Endothelial cell of umbilical vein (primary cell): ENCODE measurements at regions of chr5 and their contacts with region 1.

Region 1: GRCh38 chr5:177113566-177114424 is 19.8 kb upstream of the NSD1 start:
- DNase-seq: peak; percentile 78
- H3K4me3 ChIP-seq: no peak overlapping the region
- H3K27ac ChIP-seq: no peak overlapping the region
- H3K4me1 ChIP-seq: no peaks in the 10 kb centered on the region
- H3K27me3 ChIP-seq: no peaks in the 10 kb centered on the region
- CTCF ChIP-seq: peak; percentile 96 to 97
- POLR2A ChIP-seq: no peak

Region 2: GRCh38 chr5:176629853-176630712 is 483.7 kb before region 1 on chr5 and contains the starts of genes EIF4E1B and SNCB:
- CTCF ChIA-PET with region 1: no interaction called
- POLR2A ChIA-PET with region 1: no interaction called
- dilution Hi-C with region 1: no loop called
- intact Hi-C with region 1: no loop called
- DNase-seq: peak; percentile 49
- H3K4me3 ChIP-seq: peak within 1 kb of the TSS in 2 of 3 experiments; percentile 1 to 18
- H3K27ac ChIP-seq: no peak within 1 kb of the TSS
- H3K4me1 ChIP-seq: no peaks in the 10 kb centered on the region
- H3K27me3 ChIP-seq: peaks cover 59 to 61% of the 10 kb centered on the region in 2 experiments
- CTCF ChIP-seq: no peak
- POLR2A ChIP-seq: no peak
- total RNA-seq, gene EIF4E1B: not detected in 2 replicates
- total RNA-seq, gene SNCB: not detected in 2 replicates

Region 3: DNA sequence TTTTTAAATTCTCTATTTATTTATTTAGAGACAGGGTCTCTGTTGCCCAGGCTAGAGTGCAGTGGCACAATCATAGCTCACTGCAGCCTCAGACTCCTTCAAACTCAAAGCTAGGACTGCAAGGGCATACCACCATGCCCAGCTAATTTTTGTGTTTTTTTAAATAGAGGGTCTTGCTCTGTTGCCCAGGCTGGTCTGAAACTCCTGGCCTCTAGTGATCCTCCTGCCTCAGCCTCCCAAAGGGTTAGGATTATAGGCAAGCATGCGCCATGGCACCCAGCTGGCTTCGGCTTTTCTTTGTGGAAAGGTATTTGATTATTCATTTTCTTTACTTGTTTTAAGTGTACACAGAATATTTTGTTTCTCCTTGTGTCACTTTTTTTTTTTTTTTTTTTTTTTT is 86.1 kb before region 1 on chr5:
- CTCF ChIA-PET with region 1: interaction called, 11 read pairs
- POLR2A ChIA-PET with region 1: no interaction called
- dilution Hi-C with region 1: no loop called
- intact Hi-C with region 1: no loop called
- DNase-seq: no peak
- H3K4me3 ChIP-seq: no peak overlapping the region
- H3K27ac ChIP-seq: no peak overlapping the region
- H3K4me1 ChIP-seq: peaks cover 4% of the 10 kb centered on the region
- H3K27me3 ChIP-seq: no peaks in the 10 kb centered on the region
- CTCF ChIP-seq: no peak
- POLR2A ChIP-seq: no peak

Region 4: DNA sequence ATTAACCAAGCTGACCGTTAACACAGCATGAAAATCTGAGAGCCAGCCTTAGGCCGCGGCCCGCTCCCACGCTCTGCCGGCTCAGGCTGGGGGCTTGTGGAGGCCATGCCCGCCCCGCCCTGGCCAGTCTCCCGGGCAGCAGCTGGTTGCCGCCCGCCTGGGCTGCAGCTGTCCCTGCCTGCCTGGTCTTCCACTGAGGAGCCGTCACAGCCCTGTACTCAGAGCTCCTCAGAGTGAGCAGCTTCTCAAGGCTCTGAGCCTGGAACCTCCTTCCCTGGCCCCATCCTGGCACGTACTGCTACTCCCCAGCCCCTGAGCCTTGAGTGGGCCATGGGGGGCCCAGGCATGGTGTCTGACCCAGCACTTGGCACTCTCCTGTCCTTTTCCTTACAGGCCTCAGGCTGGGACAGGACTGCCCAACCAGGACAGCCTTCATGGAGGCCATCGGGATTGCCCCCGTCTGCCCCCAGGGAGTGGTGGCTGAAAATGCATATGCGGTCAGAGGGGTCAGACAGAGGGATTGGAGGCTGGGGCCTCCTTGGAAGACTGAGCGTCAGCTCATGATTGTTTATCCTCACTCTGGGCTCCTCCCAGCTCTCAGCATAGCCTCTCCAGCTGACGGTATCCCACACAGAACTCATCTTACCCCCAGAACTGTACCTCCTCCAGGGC is 15.2 kb before region 1 on chr5:
- CTCF ChIA-PET with region 1: interaction called, 10 read pairs
- POLR2A ChIA-PET with region 1: no interaction called
- dilution Hi-C with region 1: no loop called
- intact Hi-C with region 1: no loop called
- DNase-seq: no peak
- H3K4me3 ChIP-seq: no peak overlapping the region
- H3K27ac ChIP-seq: no peak overlapping the region
- H3K4me1 ChIP-seq: peaks cover 20% of the 10 kb centered on the region
- H3K27me3 ChIP-seq: no peaks in the 10 kb centered on the region
- CTCF ChIP-seq: no peak
- POLR2A ChIP-seq: no peak

Region 5: GRCh38 chr5:177276886-177277285 is 163.1 kb after region 1 on chr5:
- CTCF ChIA-PET with region 1: interaction called, 6 read pairs
- POLR2A ChIA-PET with region 1: no interaction called
- dilution Hi-C with region 1: no loop called
- intact Hi-C with region 1: loop called (anchors 1 kb)
- DNase-seq: peak; percentile 61
- H3K4me3 ChIP-seq: no peak overlapping the region
- H3K27ac ChIP-seq: no peak overlapping the region
- H3K4me1 ChIP-seq: peaks cover 3% of the 10 kb centered on the region
- H3K27me3 ChIP-seq: no peaks in the 10 kb centered on the region
- CTCF ChIP-seq: no peak
- POLR2A ChIP-seq: no peak

Region 6: DNA sequence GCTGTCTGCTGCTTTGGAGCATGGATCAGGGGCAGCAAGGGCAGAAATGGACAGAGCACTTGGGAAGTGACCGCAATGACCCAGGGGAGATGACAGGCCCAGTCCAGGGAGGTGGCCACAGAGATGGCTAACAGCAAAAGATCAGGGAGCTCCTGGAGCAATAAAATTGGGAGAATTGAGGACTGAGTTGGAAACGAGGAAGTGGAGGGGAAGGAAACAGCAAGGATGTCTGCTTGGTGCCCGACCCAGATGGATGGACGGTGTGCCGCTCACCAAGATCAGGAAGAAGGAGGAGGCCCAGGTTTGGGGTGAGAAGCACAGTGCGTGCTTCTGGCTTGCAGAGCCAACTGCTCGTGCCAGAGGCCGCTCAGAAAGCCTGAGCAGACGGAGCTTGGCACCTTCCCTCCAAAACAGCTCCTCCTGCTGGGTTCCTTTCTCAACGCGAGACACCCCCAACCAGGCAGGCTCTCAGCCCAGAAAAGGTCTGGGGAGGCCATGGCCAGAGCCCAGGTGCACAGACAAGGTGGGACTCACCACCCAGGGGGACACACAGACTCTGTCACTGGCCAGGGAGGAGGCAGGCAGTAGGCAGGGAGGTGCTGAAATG is 268.7 kb after region 1 on chr5:
- CTCF ChIA-PET with region 1: interaction called, 25 read pairs
- POLR2A ChIA-PET with region 1: no interaction called
- dilution Hi-C with region 1: no loop called
- intact Hi-C with region 1: no loop called
- DNase-seq: peak; percentile 37
- H3K4me3 ChIP-seq: no peak overlapping the region
- H3K27ac ChIP-seq: no peak overlapping the region
- H3K4me1 ChIP-seq: no peaks in the 10 kb centered on the region
- H3K27me3 ChIP-seq: peaks cover 0 to 4% of the 10 kb centered on the region in 2 experiments
- CTCF ChIP-seq: peak in 1 of 2 donors; percentile 58
- POLR2A ChIP-seq: no peak

Region 7: DNA sequence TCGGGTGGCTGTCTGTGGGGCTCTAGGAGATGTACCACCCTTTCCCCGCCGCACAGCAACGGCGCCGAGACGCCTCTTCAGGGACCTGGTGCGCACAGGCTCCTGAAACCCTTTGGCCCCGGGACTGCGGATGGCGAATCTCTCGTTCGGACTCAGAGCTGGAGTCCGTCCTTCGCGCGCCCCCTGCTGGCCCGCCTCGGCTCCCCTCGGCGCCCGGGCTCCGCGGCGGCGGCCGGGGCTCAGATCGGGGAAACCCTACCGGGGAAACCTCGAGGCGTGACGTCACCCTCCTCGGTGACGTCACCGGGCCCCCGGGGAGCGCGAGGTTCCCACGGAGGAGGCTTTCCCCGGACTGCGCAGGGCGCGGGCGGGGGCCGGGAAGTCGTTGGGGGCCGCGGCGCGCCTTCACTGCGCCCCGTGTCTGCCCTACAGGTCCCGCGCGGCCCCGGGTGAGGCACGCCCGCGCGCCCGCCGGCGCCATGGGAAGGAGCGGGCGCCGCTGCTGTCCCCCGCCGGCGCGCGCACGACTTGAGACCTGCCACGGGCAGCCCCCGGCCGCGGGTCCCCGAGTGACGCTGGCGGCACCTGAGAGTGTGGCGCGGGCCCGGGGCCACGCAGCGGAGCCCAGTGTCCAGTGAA is 340.7 kb after region 1 on chr5:
- CTCF ChIA-PET with region 1: interaction called, 5 read pairs
- POLR2A ChIA-PET with region 1: no interaction called
- dilution Hi-C with region 1: no loop called
- intact Hi-C with region 1: loop called (anchors 1 kb)
- DNase-seq: peak; percentile 92
- H3K4me3 ChIP-seq: peak overlapping the region; percentile 6 to 38 (median 21)
- H3K27ac ChIP-seq: peak overlapping the region; percentile 77
- H3K4me1 ChIP-seq: peaks cover 28% of the 10 kb centered on the region
- H3K27me3 ChIP-seq: no peaks in the 10 kb centered on the region
- CTCF ChIP-seq: peak; percentile 83 to 99
- POLR2A ChIP-seq: peak; percentile 59